A673 (cell line): ENCODE measurements at regions of chr14 and their contacts with region 1.

Region 1: DNA sequence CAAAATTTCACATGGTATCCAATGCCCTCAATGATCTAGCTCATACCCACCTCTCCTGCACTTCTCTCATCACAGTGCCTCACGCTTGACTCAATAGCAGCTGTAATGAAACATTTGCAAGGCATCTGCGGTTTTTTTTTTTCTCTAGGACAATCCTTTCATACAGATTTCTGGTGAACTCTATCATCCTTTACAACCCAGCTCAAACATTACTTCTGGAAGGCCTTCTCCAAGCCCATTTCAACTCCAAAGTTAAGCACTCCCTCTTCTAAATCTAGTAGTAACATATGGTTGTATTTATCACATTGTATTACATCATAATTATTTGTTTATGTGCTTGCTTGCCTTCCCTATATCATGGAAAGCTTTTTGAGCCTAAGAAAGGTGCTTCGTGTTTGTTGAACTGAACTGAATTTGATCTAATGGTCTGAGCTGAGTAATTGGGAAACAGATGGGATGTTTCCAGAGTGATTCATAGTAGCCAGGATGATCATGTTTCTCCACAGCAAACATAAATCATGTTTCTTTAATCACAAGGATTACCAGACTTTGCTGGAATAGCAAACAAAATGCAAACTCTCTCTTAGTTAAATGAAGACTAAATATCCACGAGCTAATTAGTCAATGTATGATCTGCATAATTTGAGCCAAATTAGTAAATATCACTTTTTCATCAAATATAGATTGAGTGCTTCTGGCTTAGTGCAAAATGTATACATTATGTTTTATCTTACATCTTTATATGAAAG is 14.3 kb downstream of the CFL2 start:
- DNase-seq: peak; percentile 68
- H3K4me3 ChIP-seq: no peak overlapping the region
- H3K27ac ChIP-seq: no peak overlapping the region
- H3K4me1 ChIP-seq: peaks cover 14% of the 10 kb centered on the region
- H3K27me3 ChIP-seq: no peaks in the 10 kb centered on the region
- CTCF ChIP-seq: no peak

Region 2: GRCh38 chr14:34113005-34113511 is 587.0 kb before region 1 on chr14:
- CTCF ChIA-PET with region 1: no interaction called
- POLR2A ChIA-PET with region 1: no interaction called
- intact Hi-C with region 1: no loop called
- DNase-seq: peak; percentile 33
- H3K4me3 ChIP-seq: no peak overlapping the region
- H3K27ac ChIP-seq: no peak overlapping the region
- H3K4me1 ChIP-seq: no peaks in the 10 kb centered on the region
- H3K27me3 ChIP-seq: no peaks in the 10 kb centered on the region
- CTCF ChIP-seq: no peak

Region 3: GRCh38 chr14:34682787-34683321 is 17.2 kb before region 1 on chr14:
- CTCF ChIA-PET with region 1: interaction called, 14 read pairs
- POLR2A ChIA-PET with region 1: interaction called, 8 read pairs
- intact Hi-C with region 1: no loop called
- DNase-seq: no peak
- H3K4me3 ChIP-seq: no peak overlapping the region
- H3K27ac ChIP-seq: no peak overlapping the region
- H3K4me1 ChIP-seq: peaks cover 6% of the 10 kb centered on the region
- H3K27me3 ChIP-seq: no peaks in the 10 kb centered on the region
- CTCF ChIP-seq: no peak

Region 4: DNA sequence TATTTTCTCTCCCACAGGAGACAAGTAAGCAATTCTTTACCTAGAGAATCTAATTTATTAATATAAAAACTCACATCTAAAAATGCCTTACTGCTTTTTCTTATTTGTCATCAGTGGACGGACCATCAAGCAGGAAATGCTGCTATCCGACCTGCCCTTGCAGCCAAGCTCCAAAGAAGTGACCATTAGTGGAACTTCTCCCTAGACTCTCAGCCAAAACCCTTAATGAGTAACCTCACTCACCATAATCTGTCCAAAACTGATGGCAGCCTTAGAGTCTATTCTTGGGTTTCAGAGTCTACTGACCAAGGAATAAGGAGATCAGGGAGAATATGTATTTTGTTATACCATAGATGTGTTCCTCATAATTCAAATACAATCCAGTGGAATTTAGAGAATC is 75.3 kb after region 1 on chr14:
- CTCF ChIA-PET with region 1: no interaction called
- POLR2A ChIA-PET with region 1: interaction called, 12 read pairs
- intact Hi-C with region 1: no loop called
- DNase-seq: no peak
- H3K4me3 ChIP-seq: no peak overlapping the region
- H3K27ac ChIP-seq: no peak overlapping the region
- H3K4me1 ChIP-seq: no peaks in the 10 kb centered on the region
- H3K27me3 ChIP-seq: no peaks in the 10 kb centered on the region
- CTCF ChIP-seq: no peak

Region 5: GRCh38 chr14:35261774-35262173 is 561.7 kb after region 1 on chr14:
- CTCF ChIA-PET with region 1: no interaction called
- POLR2A ChIA-PET with region 1: no interaction called
- intact Hi-C with region 1: no loop called
- DNase-seq: no peak
- H3K4me3 ChIP-seq: no peak overlapping the region
- H3K27ac ChIP-seq: no peak overlapping the region
- H3K4me1 ChIP-seq: no peaks in the 10 kb centered on the region
- H3K27me3 ChIP-seq: no peaks in the 10 kb centered on the region
- CTCF ChIP-seq: no peak